ENCODE measurements at regions of chr3 and their contacts with region 1.

Region 1: DNA sequence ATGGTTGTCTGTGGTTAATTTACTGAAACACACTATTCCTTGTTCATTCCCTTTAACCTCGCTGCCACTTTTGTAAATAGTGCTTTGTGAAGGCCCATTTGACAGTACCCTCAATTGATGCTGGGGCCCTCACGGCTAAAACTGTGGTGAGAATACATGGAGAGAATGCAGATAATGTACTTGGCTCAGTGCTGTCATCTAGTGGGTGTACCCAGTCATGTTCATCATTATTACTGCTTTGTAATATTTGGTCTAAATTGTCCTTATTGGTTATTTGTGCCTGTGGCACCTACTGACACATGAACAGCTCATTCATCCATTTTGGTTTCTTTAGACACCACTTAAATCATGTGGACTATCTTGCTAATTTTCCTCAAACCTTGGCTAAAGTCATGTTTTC is 543.6 kb downstream of the EDEM1 start:
- DNase-seq: peak; percentile 27 to 36 (median 32)
- ATAC-seq: peak; percentile 74
- H3K4me3 ChIP-seq: no peak overlapping the region
- H3K27ac ChIP-seq: no peak overlapping the region
- H3K4me1 ChIP-seq: no peaks in the 10 kb centered on the region; a peak in 3 of 5 replicates
- H3K27me3 ChIP-seq: no peaks in the 10 kb centered on the region
- CTCF ChIP-seq: peak; percentile 57 to 78 (median 67); a peak in 4 of 6 replicates
- EP300 ChIP-seq: no peak
- POLR2A ChIP-seq: no peak
- RAD21 ChIP-seq: peak; percentile 82 to 85

Region 2: DNA sequence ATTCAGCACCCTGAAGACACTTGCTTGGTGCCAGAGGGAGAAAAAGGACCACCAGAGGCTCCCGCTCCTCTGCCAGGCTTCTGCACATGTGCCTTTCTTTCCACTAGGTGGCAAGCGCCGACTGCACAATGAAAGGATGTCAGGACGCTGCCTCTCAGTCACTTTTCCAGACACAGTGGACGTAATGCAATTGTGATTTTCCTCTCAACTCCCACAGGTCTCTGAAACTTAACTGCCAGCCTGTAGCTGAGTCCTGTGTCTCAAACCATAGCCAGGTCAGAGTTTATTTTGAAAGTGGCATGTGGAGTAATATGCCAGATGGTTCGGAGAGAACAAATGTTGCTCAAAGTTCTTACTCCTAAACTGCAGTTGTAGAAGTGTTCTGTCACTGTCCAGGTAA is 1075.0 kb before region 1 on chr3:
- CTCF ChIA-PET with region 1: no interaction called
- POLR2A ChIA-PET with region 1: no interaction called
- in situ Hi-C with region 1: no loop called
- intact Hi-C with region 1: loop called (anchors 10 kb)
- DNase-seq: peak; percentile 64 to 82 (median 70)
- ATAC-seq: peak; percentile 99
- H3K4me3 ChIP-seq: no peak overlapping the region
- H3K27ac ChIP-seq: no peak overlapping the region
- H3K4me1 ChIP-seq: no peaks in the 10 kb centered on the region
- H3K27me3 ChIP-seq: no peaks in the 10 kb centered on the region
- CTCF ChIP-seq: peak; percentile 90 to 98 (median 96)
- EP300 ChIP-seq: no peak
- POLR2A ChIP-seq: no peak
- RAD21 ChIP-seq: peak; percentile 46 to 81

Region 3: DNA sequence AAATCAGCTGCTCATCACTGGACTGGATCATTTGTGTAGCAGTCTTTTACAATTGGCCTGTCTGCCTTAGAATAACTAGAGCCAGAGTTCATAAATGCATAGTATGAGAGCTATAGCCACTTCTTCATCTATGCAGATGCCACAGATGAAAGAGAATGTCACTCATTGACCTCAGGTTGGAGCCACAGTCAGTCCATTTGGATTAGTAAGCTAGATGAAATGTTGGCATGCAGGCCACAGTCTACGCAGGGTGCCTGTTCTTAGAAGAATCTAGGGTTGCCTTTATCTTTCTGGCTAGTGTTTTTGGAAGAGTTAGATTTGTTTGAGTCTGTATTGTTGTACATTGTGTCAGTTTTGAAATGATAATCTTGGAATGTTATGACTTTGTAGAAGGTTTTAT is 569.0 kb before region 1 on chr3:
- CTCF ChIA-PET with region 1: no interaction called
- POLR2A ChIA-PET with region 1: no interaction called
- in situ Hi-C with region 1: no loop called
- intact Hi-C with region 1: no loop called
- DNase-seq: no peak
- ATAC-seq: no peak; the same call in 2 of the 3 replicates
- H3K4me3 ChIP-seq: no peak overlapping the region
- H3K27ac ChIP-seq: no peak overlapping the region
- H3K4me1 ChIP-seq: peaks cover 2 to 12% of the 10 kb centered on the region in 2 experiments; a peak in 4 of 5 replicates
- H3K27me3 ChIP-seq: no peaks in the 10 kb centered on the region
- CTCF ChIP-seq: no peak
- EP300 ChIP-seq: no peak
- POLR2A ChIP-seq: no peak
- RAD21 ChIP-seq: no peak

Region 4: GRCh38 chr3:5226783-5227182 is 504.3 kb before region 1 on chr3:
- CTCF ChIA-PET with region 1: no interaction called
- POLR2A ChIA-PET with region 1: no interaction called
- in situ Hi-C with region 1: no loop called
- intact Hi-C with region 1: loop called (anchors 10 kb)
- DNase-seq: peak in 2 of 4 experiments; percentile 39 to 41
- ATAC-seq: peak; percentile 46; the same call in 2 of the 3 replicates
- H3K4me3 ChIP-seq: no peak overlapping the region
- H3K27ac ChIP-seq: no peak overlapping the region
- H3K4me1 ChIP-seq: peaks cover 0 to 3% of the 10 kb centered on the region in 2 experiments; a peak in 2 of 5 replicates
- H3K27me3 ChIP-seq: peaks cover 29 to 47% of the 10 kb centered on the region in 2 experiments; a peak in 3 of 5 replicates
- CTCF ChIP-seq: peak; percentile 40 to 87 (median 56); a peak in 5 of 6 replicates
- EP300 ChIP-seq: no peak
- POLR2A ChIP-seq: no peak
- RAD21 ChIP-seq: peak; percentile 76 to 89

Region 5: DNA sequence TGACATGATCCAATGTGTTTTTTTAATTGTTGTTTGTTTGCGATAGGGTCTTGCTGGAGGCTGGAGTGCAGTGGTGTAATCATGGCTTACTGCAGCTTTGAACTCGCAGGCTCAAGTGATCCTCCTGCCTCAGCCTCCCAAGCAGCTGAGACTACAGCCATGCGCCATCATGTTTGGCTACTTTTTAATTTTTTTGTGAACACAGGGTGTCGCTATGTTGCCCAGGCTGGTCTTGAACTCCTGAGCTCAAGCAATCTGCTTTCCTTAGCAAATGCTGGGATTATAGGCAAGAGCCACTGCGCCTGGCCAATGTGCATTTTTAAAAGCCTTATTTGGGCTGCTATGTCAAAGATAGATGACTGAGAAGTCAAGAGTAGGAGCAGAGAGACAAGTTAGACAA is 420.6 kb before region 1 on chr3:
- CTCF ChIA-PET with region 1: no interaction called
- POLR2A ChIA-PET with region 1: no interaction called
- in situ Hi-C with region 1: no loop called
- intact Hi-C with region 1: loop called (anchors 2 kb)
- DNase-seq: peak in 1 of 4 experiments; percentile 36
- ATAC-seq: peak; percentile 82
- H3K4me3 ChIP-seq: no peak overlapping the region
- H3K27ac ChIP-seq: no peak overlapping the region
- H3K4me1 ChIP-seq: no peaks in the 10 kb centered on the region
- H3K27me3 ChIP-seq: peaks cover 6 to 22% of the 10 kb centered on the region in 2 experiments; a peak in 3 of 5 replicates
- CTCF ChIP-seq: peak; percentile 31 to 55 (median 52); a peak in 4 of 6 replicates
- EP300 ChIP-seq: no peak
- POLR2A ChIP-seq: no peak
- RAD21 ChIP-seq: peak; percentile 58 to 77

Region 6: DNA sequence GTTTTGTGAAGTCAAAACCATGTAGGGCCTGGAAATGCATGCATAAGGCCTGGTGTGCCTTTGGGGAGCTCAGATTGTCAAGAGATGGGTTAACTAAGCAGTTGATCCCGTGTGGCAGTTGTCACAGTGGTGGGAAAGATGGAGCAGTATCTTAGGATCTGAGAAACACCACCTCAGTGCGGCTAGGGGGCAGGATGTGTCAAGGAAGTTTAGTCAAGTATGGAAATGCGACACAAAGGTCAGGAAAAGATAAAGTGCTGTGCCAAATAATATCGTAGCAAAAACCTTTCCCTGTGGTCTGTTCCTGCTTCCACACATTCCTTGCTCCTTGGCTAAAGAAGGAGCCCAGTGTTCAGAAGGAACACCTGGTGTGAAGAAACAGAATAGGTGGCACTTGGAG is 147.2 kb before region 1 on chr3:
- CTCF ChIA-PET with region 1: no interaction called
- POLR2A ChIA-PET with region 1: interaction called, 3 read pairs
- in situ Hi-C with region 1: no loop called
- intact Hi-C with region 1: loop called (anchors 1 kb)
- DNase-seq: peak in 2 of 4 experiments; percentile 32 to 34
- ATAC-seq: peak; percentile 78
- H3K4me3 ChIP-seq: no peak overlapping the region
- H3K27ac ChIP-seq: no peak overlapping the region
- H3K4me1 ChIP-seq: peaks cover 0 to 35% of the 10 kb centered on the region in 2 experiments; a peak in 4 of 5 replicates
- H3K27me3 ChIP-seq: no peaks in the 10 kb centered on the region; a peak in 1 of 5 replicates
- CTCF ChIP-seq: peak in 2 of 3 experiments; percentile 46 to 57; a peak in 2 of 6 replicates
- EP300 ChIP-seq: no peak
- POLR2A ChIP-seq: no peak
- RAD21 ChIP-seq: peak; percentile 55 to 65

Measured in K562 (cell line).